ENCODE measurements at regions of chr1 and their contacts with region 1.

Region 1: GRCh38 chr1:193019442-193020026 is 39.6 kb downstream of the UCHL5 start:
- DNase-seq: peak; percentile 60
- H3K4me3 ChIP-seq: no peak overlapping the region
- H3K27ac ChIP-seq: no peak overlapping the region
- H3K4me1 ChIP-seq: no peaks in the 10 kb centered on the region
- CTCF ChIP-seq: peak; percentile 84

Region 2: GRCh38 chr1:192477630-192478029 is 541.9 kb before region 1 on chr1:
- CTCF ChIA-PET with region 1: no interaction called
- POLR2A ChIA-PET with region 1: interaction called, 4 read pairs
- intact Hi-C with region 1: loop called (anchors 5 kb)
- DNase-seq: peak; percentile 58
- H3K4me3 ChIP-seq: no peak overlapping the region
- H3K27ac ChIP-seq: no peak overlapping the region
- H3K4me1 ChIP-seq: no peaks in the 10 kb centered on the region
- CTCF ChIP-seq: peak; percentile 90